Stomach (tissue), 19 donors: ENCODE measurements at regions of chr5 and their contacts with region 1.

Region 1: GRCh38 chr5:31581498-31582099 is 49.5 kb downstream of the C5orf22 start:
- DNase-seq: peak in 1 of 2 donors; percentile 66
- H3K4me3 ChIP-seq: no peak overlapping the region
- H3K27ac ChIP-seq: no peak overlapping the region
- H3K4me1 ChIP-seq: no peaks in the 10 kb centered on the region
- H3K27me3 ChIP-seq: no peaks in the 10 kb centered on the region
- CTCF ChIP-seq: peak in 3 of 7 experiments; percentile 12 to 50 (median 32)
- EP300 ChIP-seq: no peak
- POLR2A ChIP-seq: no peak

Region 2: DNA sequence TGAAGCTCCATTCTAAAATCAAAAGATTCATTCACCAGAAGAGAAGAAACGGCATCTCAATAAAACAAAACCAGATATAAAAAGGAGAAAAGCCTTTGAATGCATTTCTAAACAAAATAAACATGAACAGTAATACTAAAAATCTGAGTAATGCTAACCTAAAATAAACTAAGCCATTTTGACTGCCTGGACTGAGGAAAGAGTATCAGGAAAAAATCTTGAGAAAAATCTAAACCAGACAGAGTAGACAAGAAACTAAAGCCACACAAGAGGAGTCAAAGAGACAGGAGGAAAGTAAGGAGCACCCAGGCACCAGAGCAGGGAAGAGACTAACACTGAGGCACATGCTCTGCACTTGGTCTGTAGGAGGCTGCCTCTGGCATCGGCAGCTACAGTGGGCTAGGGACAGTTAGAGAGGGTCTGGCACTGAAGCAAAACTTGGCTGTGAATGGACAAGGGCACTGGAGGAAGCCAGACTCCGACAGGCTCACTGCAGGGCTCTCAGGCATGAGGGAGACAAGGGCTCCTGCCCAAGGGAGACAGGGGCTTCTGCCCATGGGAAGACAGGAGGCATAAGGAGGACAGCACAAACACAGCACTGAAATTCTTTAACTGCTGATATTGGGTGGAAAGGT is 100.0 kb before region 1 on chr5:
- intact Hi-C with region 1: no loop called
- DNase-seq: no peak
- H3K4me3 ChIP-seq: no peak overlapping the region
- H3K27ac ChIP-seq: no peak overlapping the region
- H3K4me1 ChIP-seq: peaks cover 0 to 18% (median 3%) of the 10 kb centered on the region in 4 donors
- H3K27me3 ChIP-seq: no peaks in the 10 kb centered on the region
- CTCF ChIP-seq: no peak
- EP300 ChIP-seq: no peak
- POLR2A ChIP-seq: no peak

Region 3: GRCh38 chr5:31492869-31493268 is 88.7 kb before region 1 on chr5:
- intact Hi-C with region 1: no loop called
- DNase-seq: peak in 1 of 2 donors; percentile 32
- H3K4me3 ChIP-seq: no peak overlapping the region
- H3K27ac ChIP-seq: peak overlapping the region in 1 of 5 donors; percentile 44
- H3K4me1 ChIP-seq: peaks cover 0 to 23% (median 8%) of the 10 kb centered on the region in 4 donors
- H3K27me3 ChIP-seq: no peaks in the 10 kb centered on the region
- CTCF ChIP-seq: no peak
- EP300 ChIP-seq: no peak
- POLR2A ChIP-seq: no peak

Region 4: GRCh38 chr5:31809050-31809870 is 227.7 kb after region 1 on chr5:
- intact Hi-C with region 1: loop called (anchors 10 kb)
- DNase-seq: peak; percentile 55 to 87
- H3K4me3 ChIP-seq: no peak overlapping the region
- H3K27ac ChIP-seq: no peak overlapping the region
- H3K4me1 ChIP-seq: no peaks in the 10 kb centered on the region
- H3K27me3 ChIP-seq: peaks cover 0 to 11% (median 0%) of the 10 kb centered on the region in 3 donors
- CTCF ChIP-seq: peak in 5 of 7 experiments; percentile 38 to 48 (median 42)
- EP300 ChIP-seq: no peak
- POLR2A ChIP-seq: no peak